Heart left ventricle (tissue), 16 donors: ENCODE measurements at regions of chr18 and their contacts with region 1.

Region 1: DNA sequence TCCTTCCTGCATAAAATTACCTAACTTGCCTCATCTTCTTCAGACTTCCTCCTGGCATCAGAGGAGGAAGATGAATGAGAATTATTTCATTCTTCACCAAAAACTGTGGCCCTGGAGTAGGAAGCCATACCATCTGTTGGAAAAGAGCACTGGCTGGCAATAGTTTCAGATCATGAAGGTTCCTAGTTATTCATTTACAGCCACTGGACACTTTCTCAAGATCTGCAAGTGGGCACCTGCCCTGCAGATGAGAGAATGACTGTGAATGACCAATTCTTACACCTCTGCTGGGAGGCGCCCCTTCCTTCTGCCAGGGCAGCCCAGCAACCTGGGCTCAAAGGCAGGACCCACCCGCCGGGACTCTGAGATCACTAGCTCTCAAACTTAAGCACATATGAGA is 13.0 kb downstream of the DIPK1C start:
- DNase-seq: no peak
- ATAC-seq: no peak
- H3K4me3 ChIP-seq: no peak overlapping the region
- H3K27ac ChIP-seq: no peak overlapping the region
- H3K4me1 ChIP-seq: peaks cover 0 to 6% (median 0%) of the 10 kb centered on the region in 12 donors
- H3K27me3 ChIP-seq: no peaks in the 10 kb centered on the region
- CTCF ChIP-seq: no peak
- POLR2A ChIP-seq: no peak

Region 2: GRCh38 chr18:74407888-74408287 is 36.2 kb before region 1 on chr18:
- intact Hi-C with region 1: loop called in 1 of 10 experiments (anchors 5 kb)
- DNase-seq: no peak
- ATAC-seq: no peak
- H3K4me3 ChIP-seq: no peak overlapping the region
- H3K27ac ChIP-seq: no peak overlapping the region
- H3K4me1 ChIP-seq: peaks cover 0 to 12% (median 0%) of the 10 kb centered on the region in 12 donors
- H3K27me3 ChIP-seq: no peaks in the 10 kb centered on the region
- CTCF ChIP-seq: no peak
- POLR2A ChIP-seq: no peak